Esophagus squamous epithelium (tissue), 5 donors: ENCODE measurements at regions of chr17 and their contacts with region 1.

Region 1: GRCh38 chr17:59329638-59330313 is 1.7 kb upstream of the YPEL2 start:
- DNase-seq: no peak
- H3K4me3 ChIP-seq: peak overlapping the region in 2 of 4 donors; percentile 86 to 92
- H3K27ac ChIP-seq: peak overlapping the region; percentile 89 to 97 (median 96)
- H3K4me1 ChIP-seq: peaks cover 17 to 64% (median 36%) of the 10 kb centered on the region in 3 donors
- H3K27me3 ChIP-seq: no peaks in the 10 kb centered on the region
- CTCF ChIP-seq: peak; percentile 56 to 79 (median 64)
- POLR2A ChIP-seq: no peak

Region 2: GRCh38 chr17:59220376-59221158 is 109.2 kb before region 1 on chr17 and contains the start of gene GDPD1:
- intact Hi-C with region 1: no loop called
- DNase-seq: peak; percentile 74
- H3K4me3 ChIP-seq: peak within 1 kb of the TSS; percentile 73 to 93 (median 88)
- H3K27ac ChIP-seq: peak within 1 kb of the TSS; percentile 77 to 88 (median 82)
- H3K4me1 ChIP-seq: peaks cover 0 to 13% (median 5%) of the 10 kb centered on the region in 3 donors
- H3K27me3 ChIP-seq: no peaks in the 10 kb centered on the region
- CTCF ChIP-seq: peak; percentile 65 to 95 (median 81)
- POLR2A ChIP-seq: peak in 2 of 4 donors; percentile 20 to 45
- total RNA-seq, gene GDPD1: 0.59 to 2.0 (median 1.9) TPM in 3 of 4 donors, not detected in the other

Region 3: GRCh38 chr17:59440784-59441441 is 111.1 kb after region 1 on chr17:
- intact Hi-C with region 1: loop called (anchors 5 kb)
- DNase-seq: peak; percentile 53
- H3K4me3 ChIP-seq: no peak overlapping the region
- H3K27ac ChIP-seq: peak overlapping the region; percentile 25 to 75 (median 68)
- H3K4me1 ChIP-seq: peaks cover 4 to 43% (median 11%) of the 10 kb centered on the region in 3 donors
- H3K27me3 ChIP-seq: no peaks in the 10 kb centered on the region
- CTCF ChIP-seq: peak; percentile 79 to 90 (median 86)
- POLR2A ChIP-seq: no peak